ENCODE measurements at regions of chr1 and their contacts with region 1.

Region 1: GRCh38 chr1:1406817-1407635 is at the start of gene MRPL20:
- DNase-seq: no peak
- ATAC-seq: peak; percentile 93
- H3K4me3 ChIP-seq: peak within 1 kb of the TSS; percentile 81 to 88
- H3K27ac ChIP-seq: peak within 1 kb of the TSS; percentile 96
- H3K4me1 ChIP-seq: peaks cover 36% of the 10 kb centered on the region
- H3K27me3 ChIP-seq: no peaks in the 10 kb centered on the region
- CTCF ChIP-seq: no peak
- total RNA-seq, gene MRPL20: 196 TPM

Region 2: GRCh38 chr1:1250786-1251284 is 156.2 kb before region 1 on chr1:
- CTCF ChIA-PET with region 1: no interaction called
- POLR2A ChIA-PET with region 1: no interaction called
- in situ Hi-C with region 1: no loop called
- intact Hi-C with region 1: no loop called
- DNase-seq: no peak
- ATAC-seq: no peak
- H3K4me3 ChIP-seq: no peak overlapping the region
- H3K27ac ChIP-seq: no peak overlapping the region; the same call in 1 of the 2 replicates
- H3K4me1 ChIP-seq: peaks cover 19% of the 10 kb centered on the region
- H3K27me3 ChIP-seq: no peaks in the 10 kb centered on the region
- CTCF ChIP-seq: no peak

Region 3: GRCh38 chr1:1435106-1435903 is 28.3 kb after region 1 on chr1 and contains the start of gene VWA1:
- CTCF ChIA-PET with region 1: interaction called, 11 read pairs
- POLR2A ChIA-PET with region 1: interaction called, 3 read pairs
- in situ Hi-C with region 1: no loop called
- intact Hi-C with region 1: loop called (anchors 5 kb)
- DNase-seq: no peak
- ATAC-seq: peak; percentile 37
- H3K4me3 ChIP-seq: peak within 1 kb of the TSS; percentile 76 to 87
- H3K27ac ChIP-seq: peak within 1 kb of the TSS; percentile 99
- H3K4me1 ChIP-seq: peaks cover 62% of the 10 kb centered on the region
- H3K27me3 ChIP-seq: no peaks in the 10 kb centered on the region
- CTCF ChIP-seq: no peak
- total RNA-seq, gene VWA1: 858 TPM

Region 4: GRCh38 chr1:1462318-1462966 is 55.4 kb after region 1 on chr1:
- CTCF ChIA-PET with region 1: interaction called, 10 read pairs
- POLR2A ChIA-PET with region 1: no interaction called
- in situ Hi-C with region 1: no loop called
- intact Hi-C with region 1: no loop called
- DNase-seq: no peak
- ATAC-seq: peak; percentile 49
- H3K4me3 ChIP-seq: no peak overlapping the region
- H3K27ac ChIP-seq: no peak overlapping the region
- H3K4me1 ChIP-seq: no peaks in the 10 kb centered on the region
- H3K27me3 ChIP-seq: no peaks in the 10 kb centered on the region
- CTCF ChIP-seq: no peak